ENCODE measurements at regions of chr16 and their contacts with region 1.

Region 1: GRCh38 chr16:3880623-3881498 is at the start of gene CREBBP:
- DNase-seq: peak; percentile 86
- H3K4me3 Mint-ChIP-seq: peak within 1 kb of the TSS; percentile 87
- H3K27ac Mint-ChIP-seq: peak within 1 kb of the TSS; percentile 85
- H3K4me1 Mint-ChIP-seq: peaks cover 34% of the 10 kb centered on the region
- H3K27me3 Mint-ChIP-seq: peaks cover 3% of the 10 kb centered on the region
- total RNA-seq, gene CREBBP: 49.3 and 50.3 TPM in 2 replicates

Region 2: GRCh38 chr16:3509470-3509928 is 371.4 kb before region 1 on chr16:
- intact Hi-C with region 1: loop called (anchors 10 kb)
- DNase-seq: peak; percentile 69
- H3K4me3 Mint-ChIP-seq: peak overlapping the region; percentile 4
- H3K27ac Mint-ChIP-seq: peak overlapping the region; percentile 79
- H3K4me1 Mint-ChIP-seq: peaks cover 61% of the 10 kb centered on the region
- H3K27me3 Mint-ChIP-seq: peaks cover under 1% of the 10 kb centered on the region

Region 3: DNA sequence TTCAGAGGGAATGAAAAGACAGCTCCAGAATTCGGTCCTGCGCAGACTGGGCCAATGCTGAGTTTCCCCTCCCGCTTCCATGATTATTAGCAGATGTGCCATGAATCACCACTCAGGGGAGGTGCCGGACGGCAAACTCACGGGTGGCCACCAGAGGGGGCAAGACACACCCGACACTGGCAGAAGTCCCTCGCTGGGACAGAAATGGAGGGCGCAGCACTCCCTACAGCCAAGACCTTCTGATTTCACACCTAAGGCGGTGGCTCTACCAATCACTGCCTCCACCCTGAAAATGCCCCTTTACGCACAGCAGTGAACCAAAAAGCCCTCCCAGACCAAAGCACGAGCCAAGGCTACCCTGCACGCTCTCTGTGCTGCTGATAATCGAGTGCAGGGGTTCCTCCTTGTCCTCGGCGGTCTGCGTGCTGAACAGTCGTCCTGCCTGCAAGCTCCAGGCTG is 190.4 kb before region 1 on chr16:
- intact Hi-C with region 1: loop called (anchors 1 kb)
- DNase-seq: peak; percentile 72
- H3K4me3 Mint-ChIP-seq: peak overlapping the region; percentile 28
- H3K27ac Mint-ChIP-seq: no peak overlapping the region
- H3K4me1 Mint-ChIP-seq: peaks cover 9% of the 10 kb centered on the region
- H3K27me3 Mint-ChIP-seq: no peaks in the 10 kb centered on the region

Region 4: DNA sequence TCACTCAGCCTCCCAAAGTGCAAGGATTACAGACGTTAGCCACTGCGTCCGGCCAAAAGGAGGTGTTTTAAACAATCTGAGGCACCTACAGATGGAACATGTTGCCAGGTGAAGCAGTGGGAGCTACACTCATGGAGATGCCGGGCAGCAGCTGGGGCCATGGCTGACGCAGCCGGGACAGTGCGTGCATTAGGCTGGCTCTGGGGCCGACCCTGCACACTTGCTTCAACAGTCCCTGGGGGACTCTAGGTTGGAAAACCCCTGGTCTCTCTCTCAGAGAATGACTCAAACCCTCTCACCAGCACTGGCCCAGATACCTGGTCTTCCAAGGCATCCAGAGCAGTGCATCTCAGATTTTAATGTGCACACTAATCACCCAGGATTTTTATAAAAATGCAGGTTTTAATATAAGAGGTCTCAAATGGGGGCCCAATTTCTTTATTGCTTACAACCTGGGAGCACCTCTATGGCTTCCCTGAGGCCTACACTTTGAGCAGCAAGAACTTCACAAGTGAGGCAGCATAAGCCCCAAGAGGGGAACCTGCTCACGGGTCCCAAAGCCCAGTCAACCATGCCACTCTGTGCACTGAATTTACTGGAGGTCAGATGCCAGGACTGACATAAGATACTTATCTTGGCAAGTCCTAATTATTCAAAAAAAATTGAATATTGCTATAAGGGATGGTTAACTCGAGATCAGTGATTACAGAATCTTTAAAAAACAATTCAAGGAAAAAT is 92.8 kb before region 1 on chr16:
- intact Hi-C with region 1: loop called (anchors 1 kb)
- DNase-seq: no peak
- H3K4me3 Mint-ChIP-seq: no peak overlapping the region
- H3K27ac Mint-ChIP-seq: peak overlapping the region; percentile 13
- H3K4me1 Mint-ChIP-seq: peaks cover 42% of the 10 kb centered on the region
- H3K27me3 Mint-ChIP-seq: peaks cover 3% of the 10 kb centered on the region

Region 5: GRCh38 chr16:3992297-3993051 is 111.6 kb after region 1 on chr16:
- intact Hi-C with region 1: no loop called
- DNase-seq: no peak
- H3K4me3 Mint-ChIP-seq: no peak overlapping the region
- H3K27ac Mint-ChIP-seq: no peak overlapping the region
- H3K4me1 Mint-ChIP-seq: no peaks in the 10 kb centered on the region
- H3K27me3 Mint-ChIP-seq: no peaks in the 10 kb centered on the region

Region 6: DNA sequence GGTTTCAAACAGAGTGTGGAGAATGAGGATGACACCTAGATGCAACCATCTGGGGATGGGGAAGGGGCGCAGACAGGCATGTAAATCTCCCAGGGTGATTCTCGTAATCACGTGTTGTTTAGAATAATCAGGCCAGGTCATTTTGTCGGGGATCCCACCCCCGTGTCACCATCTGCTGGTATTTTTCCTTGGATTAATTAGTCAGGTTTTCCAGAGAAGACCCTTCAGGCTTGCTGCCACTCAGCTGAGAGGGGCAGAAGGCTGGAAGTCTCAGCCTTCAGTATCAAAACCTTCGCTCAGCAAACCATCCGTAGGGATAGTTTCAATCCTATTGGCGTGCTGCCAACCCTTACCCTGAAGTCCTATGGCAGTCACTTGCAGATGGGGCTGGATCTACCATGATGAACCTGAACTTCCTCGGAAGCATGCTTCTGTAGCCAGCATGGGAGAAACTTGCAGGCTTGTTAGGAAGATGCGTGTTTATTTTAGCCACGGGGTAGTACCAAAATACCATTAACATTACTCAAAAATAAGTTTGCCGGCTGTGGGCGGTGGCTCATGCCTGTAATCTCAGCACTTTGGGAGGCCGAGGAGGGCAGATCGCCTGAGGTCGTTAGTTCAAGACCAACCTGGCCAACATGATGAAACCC is 242.9 kb after region 1 on chr16:
- intact Hi-C with region 1: no loop called
- DNase-seq: no peak
- H3K4me3 Mint-ChIP-seq: no peak overlapping the region
- H3K27ac Mint-ChIP-seq: no peak overlapping the region
- H3K4me1 Mint-ChIP-seq: no peaks in the 10 kb centered on the region
- H3K27me3 Mint-ChIP-seq: peaks cover 24% of the 10 kb centered on the region

Region 7: DNA sequence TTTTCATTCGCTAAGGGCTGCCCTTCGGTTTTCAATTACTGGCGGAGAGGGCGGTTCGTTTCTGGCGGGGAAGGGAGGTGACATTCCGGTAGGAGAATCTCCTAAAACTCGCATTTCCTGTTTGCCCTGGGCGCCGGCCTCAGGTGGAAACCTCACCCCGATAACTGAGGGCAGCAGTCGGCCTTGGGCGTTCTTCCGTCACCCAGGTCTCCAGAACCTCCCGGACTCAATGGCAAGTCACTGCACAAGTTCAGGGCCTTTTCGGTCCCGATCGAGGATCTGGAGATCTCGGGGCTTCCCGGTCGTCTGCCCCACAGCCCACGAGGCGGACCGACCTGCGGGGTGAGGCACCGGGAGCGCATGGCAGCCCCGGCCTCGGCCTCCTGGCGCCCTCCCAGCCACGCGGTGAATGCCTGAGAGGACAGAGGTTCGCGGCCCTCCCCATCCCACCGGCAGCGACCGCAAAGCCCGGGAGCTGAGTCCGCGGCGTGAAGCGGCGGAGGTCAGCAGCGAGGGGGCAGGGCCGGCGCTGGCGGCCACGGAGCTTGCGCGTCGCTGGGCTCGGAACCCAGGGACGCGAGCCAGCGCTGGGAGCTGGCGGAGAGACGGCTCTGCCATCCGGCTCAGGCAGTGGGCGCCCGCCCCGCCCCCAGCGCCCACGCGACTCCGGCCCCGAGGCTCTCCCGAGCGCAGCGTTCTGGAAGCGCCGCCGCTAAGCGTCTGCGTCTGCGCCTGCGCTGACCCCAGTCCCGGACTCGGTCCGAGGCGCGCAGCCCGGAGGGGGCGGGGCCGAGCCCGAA is 302.6 kb after region 1 on chr16:
- intact Hi-C with region 1: loop called (anchors 5 kb)
- DNase-seq: peak; percentile 92
- H3K4me3 Mint-ChIP-seq: peak overlapping the region; percentile 80
- H3K27ac Mint-ChIP-seq: peak overlapping the region; percentile 80
- H3K4me1 Mint-ChIP-seq: peaks cover 5% of the 10 kb centered on the region
- H3K27me3 Mint-ChIP-seq: peaks cover 12% of the 10 kb centered on the region